ENCODE measurements at regions of chr3 and their contacts with region 1.

Region 1: GRCh38 chr3:12135029-12135657 is 23.6 kb downstream of the TIMP4 start:
- DNase-seq: no peak
- ATAC-seq: peak; percentile 95
- H3K4me3 ChIP-seq: no peak overlapping the region
- H3K27ac ChIP-seq: no peak overlapping the region
- H3K4me1 ChIP-seq: no peaks in the 10 kb centered on the region
- H3K27me3 ChIP-seq: no peaks in the 10 kb centered on the region
- CTCF ChIP-seq: peak; percentile 85 to 96 (median 96)
- EP300 ChIP-seq: no peak
- POLR2A ChIP-seq: no peak
- RAD21 ChIP-seq: peak; percentile 89

Region 2: GRCh38 chr3:12149029-12149428 is 13.9 kb after region 1 on chr3:
- CTCF ChIA-PET with region 1: interaction called, 24 read pairs
- POLR2A ChIA-PET with region 1: no interaction called
- RAD21 ChIA-PET with region 1: interaction called, 6 read pairs
- SMC1A ChIA-PET with region 1: interaction called, 3 read pairs
- in situ Hi-C with region 1: no loop called
- intact Hi-C with region 1: no loop called
- DNase-seq: no peak
- ATAC-seq: no peak
- H3K4me3 ChIP-seq: no peak overlapping the region
- H3K27ac ChIP-seq: no peak overlapping the region
- H3K4me1 ChIP-seq: no peaks in the 10 kb centered on the region
- H3K27me3 ChIP-seq: no peaks in the 10 kb centered on the region; a peak in 2 of 4 replicates
- CTCF ChIP-seq: no peak
- EP300 ChIP-seq: no peak
- POLR2A ChIP-seq: no peak
- RAD21 ChIP-seq: no peak

Region 3: DNA sequence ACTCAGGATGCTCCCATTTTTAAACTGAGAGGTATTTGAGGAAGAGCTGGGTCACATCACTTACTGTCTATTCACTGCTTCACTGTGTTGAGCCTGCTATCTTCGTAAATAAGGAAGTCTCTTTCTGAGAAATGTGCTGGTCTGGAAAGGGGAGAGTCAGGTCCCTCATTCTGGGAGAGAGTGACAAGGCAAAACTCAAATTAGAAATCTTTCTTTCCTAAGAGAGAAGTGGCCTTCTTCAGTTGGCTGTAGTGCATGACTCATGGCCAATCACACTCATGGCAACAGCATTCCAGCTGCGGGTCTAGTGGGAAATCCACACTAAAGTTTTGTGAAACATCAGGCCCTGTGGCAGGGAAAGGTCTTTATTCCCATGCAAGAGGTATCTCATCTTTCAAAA is 35.1 kb after region 1 on chr3:
- CTCF ChIA-PET with region 1: interaction called, 243 read pairs
- POLR2A ChIA-PET with region 1: no interaction called
- RAD21 ChIA-PET with region 1: interaction called, 93 read pairs
- SMC1A ChIA-PET with region 1: interaction called, 96 read pairs
- in situ Hi-C with region 1: loop called (anchors 5 kb)
- intact Hi-C with region 1: no loop called
- DNase-seq: no peak
- ATAC-seq: no peak
- H3K4me3 ChIP-seq: no peak overlapping the region
- H3K27ac ChIP-seq: no peak overlapping the region
- H3K4me1 ChIP-seq: no peaks in the 10 kb centered on the region
- H3K27me3 ChIP-seq: no peaks in the 10 kb centered on the region; a peak in 1 of 4 replicates
- CTCF ChIP-seq: no peak
- EP300 ChIP-seq: no peak
- POLR2A ChIP-seq: no peak
- RAD21 ChIP-seq: no peak

Region 4: GRCh38 chr3:12187448-12188327 is 52.5 kb after region 1 on chr3:
- CTCF ChIA-PET with region 1: interaction called, 243 read pairs
- POLR2A ChIA-PET with region 1: no interaction called
- RAD21 ChIA-PET with region 1: interaction called, 9 read pairs
- SMC1A ChIA-PET with region 1: interaction called, 76 read pairs
- in situ Hi-C with region 1: no loop called
- intact Hi-C with region 1: no loop called
- DNase-seq: peak; percentile 61
- ATAC-seq: peak; percentile 92
- H3K4me3 ChIP-seq: no peak overlapping the region
- H3K27ac ChIP-seq: peak overlapping the region; percentile 47
- H3K4me1 ChIP-seq: peaks cover 20% of the 10 kb centered on the region
- H3K27me3 ChIP-seq: no peaks in the 10 kb centered on the region
- CTCF ChIP-seq: no peak
- EP300 ChIP-seq: peak; percentile 32 to 60; a peak in 2 of 4 replicates
- POLR2A ChIP-seq: no peak
- RAD21 ChIP-seq: no peak

Region 5: DNA sequence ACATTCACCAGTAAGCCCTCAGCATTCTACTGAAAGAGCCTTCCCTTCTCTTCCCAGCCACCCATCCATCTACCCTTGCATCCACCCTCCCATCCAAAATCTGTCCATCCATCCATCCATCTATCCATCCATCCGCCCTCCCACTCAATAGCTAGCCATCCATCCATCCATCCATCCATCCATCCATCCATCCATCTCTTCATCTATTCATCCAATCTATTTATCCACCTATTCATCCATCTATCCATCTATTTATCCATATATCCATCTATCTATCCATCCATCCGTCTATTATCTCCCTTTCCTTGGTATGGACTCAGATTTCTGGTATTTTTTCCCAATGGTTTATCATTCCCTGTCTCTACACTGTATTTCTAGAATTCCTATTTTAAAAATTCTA is 107.6 kb after region 1 on chr3:
- CTCF ChIA-PET with region 1: no interaction called
- POLR2A ChIA-PET with region 1: no interaction called
- RAD21 ChIA-PET with region 1: no interaction called
- SMC1A ChIA-PET with region 1: no interaction called
- in situ Hi-C with region 1: no loop called
- intact Hi-C with region 1: no loop called
- DNase-seq: no peak
- ATAC-seq: no peak
- H3K4me3 ChIP-seq: no peak overlapping the region
- H3K27ac ChIP-seq: no peak overlapping the region
- H3K4me1 ChIP-seq: no peaks in the 10 kb centered on the region
- H3K27me3 ChIP-seq: no peaks in the 10 kb centered on the region; a peak in 2 of 4 replicates
- CTCF ChIP-seq: no peak
- EP300 ChIP-seq: no peak
- POLR2A ChIP-seq: no peak
- RAD21 ChIP-seq: no peak

Region 6: GRCh38 chr3:12273045-12273695 is 138.0 kb after region 1 on chr3:
- CTCF ChIA-PET with region 1: interaction called, 5 read pairs
- POLR2A ChIA-PET with region 1: no interaction called
- RAD21 ChIA-PET with region 1: interaction called, 3 read pairs
- SMC1A ChIA-PET with region 1: interaction called, 3 read pairs
- in situ Hi-C with region 1: no loop called
- intact Hi-C with region 1: loop called (anchors 5 kb)
- DNase-seq: peak; percentile 40
- ATAC-seq: peak; percentile 100
- H3K4me3 ChIP-seq: no peak overlapping the region
- H3K27ac ChIP-seq: no peak overlapping the region
- H3K4me1 ChIP-seq: no peaks in the 10 kb centered on the region
- H3K27me3 ChIP-seq: no peaks in the 10 kb centered on the region
- CTCF ChIP-seq: no peak
- EP300 ChIP-seq: peak in 1 of 2 experiments; percentile 56; a peak in 1 of 4 replicates
- POLR2A ChIP-seq: no peak
- RAD21 ChIP-seq: no peak

Region 7: DNA sequence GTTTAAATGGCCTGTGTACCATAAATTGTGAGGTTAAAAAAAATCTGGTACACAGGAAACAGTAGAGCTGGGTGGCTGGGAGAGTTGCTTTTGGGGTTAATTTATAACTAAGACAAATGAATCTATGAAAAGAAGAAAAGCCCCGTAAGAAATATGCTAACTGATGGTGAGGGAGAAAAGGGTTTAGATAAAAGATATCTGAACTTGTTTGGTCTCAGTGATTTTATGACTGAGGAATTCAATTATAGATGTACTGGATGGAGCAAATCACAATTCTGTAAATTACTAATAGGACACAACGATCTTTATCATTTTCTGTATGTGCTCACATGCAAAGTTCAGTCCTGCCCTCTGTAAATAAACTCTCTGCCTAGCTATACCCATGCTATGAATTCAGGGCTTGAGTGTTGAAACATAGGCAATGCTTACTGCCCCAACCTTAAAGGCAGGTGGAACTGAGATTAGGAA is 181.7 kb after region 1 on chr3:
- CTCF ChIA-PET with region 1: no interaction called
- POLR2A ChIA-PET with region 1: no interaction called
- RAD21 ChIA-PET with region 1: no interaction called
- SMC1A ChIA-PET with region 1: no interaction called
- in situ Hi-C with region 1: no loop called
- intact Hi-C with region 1: no loop called
- DNase-seq: peak; percentile 5
- ATAC-seq: peak; percentile 92
- H3K4me3 ChIP-seq: no peak overlapping the region
- H3K27ac ChIP-seq: no peak overlapping the region
- H3K4me1 ChIP-seq: no peaks in the 10 kb centered on the region
- H3K27me3 ChIP-seq: no peaks in the 10 kb centered on the region
- CTCF ChIP-seq: no peak
- EP300 ChIP-seq: no peak
- POLR2A ChIP-seq: no peak
- RAD21 ChIP-seq: no peak

Region 8: DNA sequence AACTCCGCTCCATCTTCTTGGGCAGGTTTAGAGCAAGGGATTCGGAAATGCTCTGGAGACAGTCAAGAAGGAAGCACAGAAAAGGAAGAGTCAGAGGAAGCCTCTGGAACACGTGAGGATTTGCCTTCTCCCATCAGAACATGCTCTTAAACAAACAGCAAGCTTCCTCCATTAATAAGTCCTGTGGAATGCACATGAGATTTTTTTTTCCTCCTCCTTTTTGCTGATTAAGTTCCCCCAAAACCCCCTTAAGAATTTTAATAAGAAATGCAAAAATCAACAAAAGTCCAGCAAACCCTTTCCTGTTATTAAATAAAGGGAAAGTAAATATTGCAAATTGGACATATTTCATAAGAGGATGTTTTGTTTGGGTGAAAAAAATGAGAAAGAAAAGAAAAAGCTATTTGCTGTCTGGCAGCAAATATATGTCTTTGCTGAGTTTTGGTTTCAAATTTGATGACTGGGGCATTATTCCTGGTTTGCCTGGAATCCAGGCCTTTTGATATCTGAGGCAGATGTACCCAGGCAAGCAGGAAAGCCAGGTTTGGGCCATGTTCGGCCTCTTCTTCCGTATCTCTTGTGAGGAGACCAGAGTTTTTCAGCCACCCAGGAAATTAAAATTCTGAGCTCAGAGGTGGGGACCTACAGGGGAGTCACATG is 341.2 kb after region 1 on chr3:
- CTCF ChIA-PET with region 1: interaction called, 255 read pairs
- POLR2A ChIA-PET with region 1: no interaction called
- RAD21 ChIA-PET with region 1: interaction called, 139 read pairs
- SMC1A ChIA-PET with region 1: interaction called, 187 read pairs
- in situ Hi-C with region 1: loop called (anchors 5 kb)
- intact Hi-C with region 1: loop called (anchors 1 kb)
- DNase-seq: no peak
- ATAC-seq: no peak
- H3K4me3 ChIP-seq: no peak overlapping the region
- H3K27ac ChIP-seq: no peak overlapping the region
- H3K4me1 ChIP-seq: no peaks in the 10 kb centered on the region
- H3K27me3 ChIP-seq: 0 out of 4 replicates have a peak, but pooled peaks cover 0 to under 1% of the 10 kb centered on the region in 2 experiments
- CTCF ChIP-seq: no peak
- EP300 ChIP-seq: no peak
- POLR2A ChIP-seq: no peak
- RAD21 ChIP-seq: no peak

Region 9: GRCh38 chr3:12556671-12557472 is 421.7 kb after region 1 on chr3 and contains the start of gene MKRN2:
- CTCF ChIA-PET with region 1: interaction called, 5 read pairs
- POLR2A ChIA-PET with region 1: no interaction called
- RAD21 ChIA-PET with region 1: no interaction called
- SMC1A ChIA-PET with region 1: no interaction called
- in situ Hi-C with region 1: no loop called
- intact Hi-C with region 1: loop called (anchors 5 kb)
- DNase-seq: peak; percentile 33
- ATAC-seq: peak; percentile 89
- H3K4me3 ChIP-seq: peak within 1 kb of the TSS; percentile 95
- H3K27ac ChIP-seq: peak within 1 kb of the TSS; percentile 89
- H3K4me1 ChIP-seq: peaks cover 22% of the 10 kb centered on the region
- H3K27me3 ChIP-seq: no peaks in the 10 kb centered on the region
- CTCF ChIP-seq: no peak
- EP300 ChIP-seq: no peak
- POLR2A ChIP-seq: peak; percentile 99
- RAD21 ChIP-seq: no peak
- polyA plus RNA-seq, gene MKRN2: 15.4 to 21.8 TPM

Measured in GM12878 (cell line).